Activated CD4-positive, alpha-beta T cell treated with anti-CD3 and anti-CD28 coated beads for 36 hours (primary cell): ENCODE measurements at regions of chr7 and their contacts with region 1.

Region 1: GRCh38 chr7:12524794-12525386 is 45.6 kb upstream of the SCIN start:
- DNase-seq: no peak
- ATAC-seq: no peak
- H3K4me3 Mint-ChIP-seq: no peak overlapping the region
- H3K27ac Mint-ChIP-seq: no peak overlapping the region
- H3K4me1 Mint-ChIP-seq: no peaks in the 10 kb centered on the region
- H3K27me3 Mint-ChIP-seq: peaks cover 8% of the 10 kb centered on the region

Region 2: DNA sequence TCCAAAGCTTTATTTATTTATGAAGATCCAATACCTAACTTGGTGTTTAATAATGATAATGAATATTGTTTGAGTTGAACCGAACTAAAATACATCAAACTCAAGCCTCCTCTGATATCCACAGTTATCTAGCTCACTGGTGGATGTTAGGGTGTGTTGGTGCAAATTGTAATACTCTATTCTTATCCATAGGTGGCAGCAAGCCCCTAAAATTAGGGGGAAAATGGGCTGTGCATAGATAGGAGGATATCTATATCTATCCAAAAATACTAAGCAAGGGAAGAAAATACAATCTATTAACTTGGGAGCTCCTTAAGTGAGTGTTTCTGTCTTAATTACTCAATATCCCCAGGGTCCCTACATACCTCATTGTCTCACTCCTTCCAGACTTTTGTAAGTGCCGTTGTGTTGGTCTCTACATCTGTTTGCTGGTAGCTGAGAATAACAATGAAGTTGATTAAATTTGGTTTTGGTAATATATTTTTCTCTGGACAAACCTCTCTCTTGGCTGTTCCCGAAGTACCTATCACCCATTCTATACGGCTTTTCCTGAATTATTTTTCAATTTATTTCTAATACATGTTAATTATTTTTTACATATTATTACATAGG is 66.3 kb before region 1 on chr7:
- CTCF ChIA-PET with region 1: interaction called, 11 read pairs
- POLR2A ChIA-PET with region 1: no interaction called
- intact Hi-C with region 1: no loop called
- DNase-seq: no peak
- ATAC-seq: peak; percentile 81
- H3K4me3 Mint-ChIP-seq: no peak overlapping the region
- H3K27ac Mint-ChIP-seq: no peak overlapping the region
- H3K4me1 Mint-ChIP-seq: no peaks in the 10 kb centered on the region
- H3K27me3 Mint-ChIP-seq: peaks cover 12% of the 10 kb centered on the region

Region 3: GRCh38 chr7:12540850-12541249 is 16.0 kb after region 1 on chr7:
- CTCF ChIA-PET with region 1: interaction called, 10 read pairs
- POLR2A ChIA-PET with region 1: no interaction called
- intact Hi-C with region 1: no loop called
- DNase-seq: no peak
- ATAC-seq: no peak
- H3K4me3 Mint-ChIP-seq: no peak overlapping the region
- H3K27ac Mint-ChIP-seq: no peak overlapping the region
- H3K4me1 Mint-ChIP-seq: no peaks in the 10 kb centered on the region
- H3K27me3 Mint-ChIP-seq: peaks cover 6% of the 10 kb centered on the region

Region 4: GRCh38 chr7:12549106-12549505 is 24.2 kb after region 1 on chr7:
- CTCF ChIA-PET with region 1: interaction called, 10 read pairs
- POLR2A ChIA-PET with region 1: no interaction called
- intact Hi-C with region 1: no loop called
- DNase-seq: no peak
- ATAC-seq: no peak
- H3K4me3 Mint-ChIP-seq: no peak overlapping the region
- H3K27ac Mint-ChIP-seq: no peak overlapping the region
- H3K4me1 Mint-ChIP-seq: no peaks in the 10 kb centered on the region
- H3K27me3 Mint-ChIP-seq: peaks cover 5% of the 10 kb centered on the region

Region 5: DNA sequence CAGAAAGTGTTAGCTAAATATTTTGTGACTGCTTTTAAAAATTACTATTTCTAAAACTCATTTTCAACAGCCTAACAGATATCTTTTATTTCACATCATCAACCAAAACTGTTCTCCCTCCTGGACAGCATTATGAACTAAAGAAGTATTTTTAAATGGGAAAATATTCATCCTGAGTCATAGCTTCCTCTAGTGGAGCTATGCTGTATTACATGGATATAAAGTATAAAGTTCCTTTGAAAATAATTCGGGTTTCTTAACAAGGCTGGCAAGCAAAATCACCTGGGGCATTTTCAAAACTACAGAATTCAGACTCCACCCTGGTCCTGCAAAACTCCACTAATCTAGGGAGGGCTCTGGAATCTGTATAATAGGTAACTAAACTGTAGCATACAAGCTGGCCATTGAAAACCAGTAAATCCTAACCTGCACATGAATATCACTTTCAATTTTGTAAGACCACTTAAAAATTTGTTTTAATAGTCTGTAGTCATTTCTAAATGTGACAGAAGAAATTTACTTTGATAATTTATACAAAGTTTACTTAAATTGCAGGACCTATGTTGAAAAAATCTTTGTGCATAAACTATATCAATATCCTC is 99.1 kb after region 1 on chr7:
- CTCF ChIA-PET with region 1: interaction called, 29 read pairs
- POLR2A ChIA-PET with region 1: interaction called, 3 read pairs
- intact Hi-C with region 1: loop called (anchors 1 kb)
- DNase-seq: no peak
- ATAC-seq: no peak
- H3K4me3 Mint-ChIP-seq: no peak overlapping the region
- H3K27ac Mint-ChIP-seq: no peak overlapping the region
- H3K4me1 Mint-ChIP-seq: no peaks in the 10 kb centered on the region
- H3K27me3 Mint-ChIP-seq: peaks cover 2% of the 10 kb centered on the region

Region 6: DNA sequence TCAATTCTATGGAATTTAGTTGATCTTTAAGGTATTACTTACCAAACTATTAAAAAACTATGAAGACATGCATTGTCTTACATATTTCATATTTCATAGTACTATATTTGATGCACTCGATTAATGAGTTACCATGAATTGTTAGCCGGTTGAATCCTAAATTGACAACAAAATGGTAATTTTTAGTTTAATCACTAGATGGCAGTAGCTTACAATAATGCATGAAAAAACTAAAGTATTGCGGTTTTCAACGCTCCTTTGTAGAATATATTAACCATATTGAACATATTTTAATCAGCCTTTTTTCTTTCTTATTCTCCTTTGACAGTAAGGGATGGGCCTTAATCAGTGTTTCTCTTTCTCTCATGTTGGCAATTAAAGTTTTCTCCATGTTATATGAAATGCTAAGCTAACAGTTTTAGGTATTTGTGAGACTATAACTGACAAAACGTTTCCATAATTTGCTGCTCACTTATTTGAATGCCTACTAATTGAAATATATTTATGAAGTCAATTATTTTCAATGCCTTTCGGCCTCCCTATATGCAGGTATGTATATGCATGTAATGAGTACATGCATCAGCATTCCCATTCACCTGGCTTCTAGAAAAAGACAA is 114.1 kb after region 1 on chr7:
- CTCF ChIA-PET with region 1: interaction called, 15 read pairs
- POLR2A ChIA-PET with region 1: no interaction called
- intact Hi-C with region 1: loop called in 1 of 2 experiments (anchors 5 kb)
- DNase-seq: no peak
- ATAC-seq: peak; percentile 50
- H3K4me3 Mint-ChIP-seq: no peak overlapping the region
- H3K27ac Mint-ChIP-seq: no peak overlapping the region
- H3K4me1 Mint-ChIP-seq: peaks cover 21% of the 10 kb centered on the region
- H3K27me3 Mint-ChIP-seq: no peaks in the 10 kb centered on the region

Region 7: DNA sequence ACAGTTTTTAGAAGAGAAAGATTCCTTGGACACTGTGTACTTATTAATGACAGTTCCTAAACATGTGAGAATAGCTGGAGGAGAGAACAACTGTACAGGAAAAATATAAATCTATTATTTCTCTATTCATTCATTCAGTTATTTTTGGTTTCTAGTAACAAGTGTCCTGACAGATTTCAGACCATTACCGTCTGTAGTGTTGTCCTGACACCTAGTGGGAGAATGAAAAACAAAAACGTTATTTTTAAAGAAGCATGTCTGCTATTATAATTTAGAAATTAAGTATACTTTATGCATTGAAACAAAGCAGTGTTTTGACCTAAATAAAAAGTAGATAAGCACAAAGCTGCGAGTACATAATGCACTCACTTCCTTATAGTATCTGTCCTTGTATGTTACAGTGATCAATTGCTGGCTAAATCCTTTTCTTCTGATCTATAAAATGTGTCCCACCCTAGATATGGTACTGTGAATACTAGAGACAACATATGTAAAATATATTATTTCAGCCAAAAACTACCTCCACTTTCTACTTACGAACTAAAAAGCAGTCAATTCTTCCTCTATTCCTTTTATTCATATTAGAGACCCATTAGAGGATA is 738.1 kb after region 1 on chr7:
- CTCF ChIA-PET with region 1: interaction called, 10 read pairs
- POLR2A ChIA-PET with region 1: no interaction called
- intact Hi-C with region 1: loop called (anchors 1 to 2 kb)
- DNase-seq: no peak
- ATAC-seq: no peak
- H3K4me3 Mint-ChIP-seq: no peak overlapping the region
- H3K27ac Mint-ChIP-seq: no peak overlapping the region
- H3K4me1 Mint-ChIP-seq: no peaks in the 10 kb centered on the region
- H3K27me3 Mint-ChIP-seq: peaks cover 7% of the 10 kb centered on the region